Right ventricle myocardium superior (tissue), 1 donor: ENCODE measurements at regions of chr2 and their contacts with region 1.

Region 1: DNA sequence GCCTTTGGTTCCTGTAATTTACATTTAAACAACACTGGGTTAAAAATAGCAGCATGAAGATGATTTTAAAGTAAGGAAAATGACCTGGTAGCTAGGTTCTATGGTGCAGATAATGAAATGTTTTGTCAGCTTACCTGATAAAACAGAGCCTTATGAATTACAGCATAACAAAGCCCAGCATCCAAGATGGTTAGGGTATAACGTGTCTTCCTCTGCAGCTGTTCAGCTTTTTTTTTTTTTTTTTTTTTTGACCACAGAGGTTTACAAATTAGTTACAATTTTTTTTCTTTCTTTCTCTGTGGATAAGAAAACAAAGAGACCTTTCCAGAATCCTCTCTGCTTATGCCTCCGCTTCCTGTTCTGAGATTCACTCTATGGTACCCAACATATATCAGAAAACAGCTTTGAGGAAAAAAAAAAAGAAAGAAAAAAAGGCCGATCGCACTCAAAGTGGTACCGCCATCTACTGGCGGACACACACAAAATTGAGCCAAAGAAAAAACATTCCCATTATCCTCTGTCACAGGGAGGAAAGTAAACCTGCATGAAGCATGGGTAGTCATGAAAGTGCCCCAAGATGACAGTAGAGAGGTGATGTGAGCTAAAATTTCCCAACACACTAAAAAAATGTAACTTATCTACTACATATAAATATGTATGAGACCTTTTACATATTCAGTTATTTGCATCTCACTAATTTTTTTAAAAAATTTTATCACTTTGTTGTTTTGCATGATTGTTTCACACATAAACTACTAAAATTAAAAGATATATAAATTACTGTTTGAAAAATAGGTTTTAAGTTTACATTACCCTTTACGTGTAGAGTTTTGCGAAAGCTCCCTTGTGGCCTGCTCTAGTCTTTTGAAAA is at the start of gene SCN3A:
- DNase-seq: no peak
- ATAC-seq: peak; percentile 49
- total RNA-seq, gene SCN3A: 0.89 TPM

Region 2: GRCh38 chr2:165015052-165015642 is 188.8 kb before region 1 on chr2:
- intact Hi-C with region 1: loop called (anchors 2 kb)
- DNase-seq: peak; percentile 70
- ATAC-seq: peak; percentile 86